Activated CD4-positive, alpha-beta memory T cell treated with anti-CD3 and anti-CD28 coated beads for 36 hours (primary cell): ENCODE measurements at regions of chr10 and their contacts with region 1.

Region 1: DNA sequence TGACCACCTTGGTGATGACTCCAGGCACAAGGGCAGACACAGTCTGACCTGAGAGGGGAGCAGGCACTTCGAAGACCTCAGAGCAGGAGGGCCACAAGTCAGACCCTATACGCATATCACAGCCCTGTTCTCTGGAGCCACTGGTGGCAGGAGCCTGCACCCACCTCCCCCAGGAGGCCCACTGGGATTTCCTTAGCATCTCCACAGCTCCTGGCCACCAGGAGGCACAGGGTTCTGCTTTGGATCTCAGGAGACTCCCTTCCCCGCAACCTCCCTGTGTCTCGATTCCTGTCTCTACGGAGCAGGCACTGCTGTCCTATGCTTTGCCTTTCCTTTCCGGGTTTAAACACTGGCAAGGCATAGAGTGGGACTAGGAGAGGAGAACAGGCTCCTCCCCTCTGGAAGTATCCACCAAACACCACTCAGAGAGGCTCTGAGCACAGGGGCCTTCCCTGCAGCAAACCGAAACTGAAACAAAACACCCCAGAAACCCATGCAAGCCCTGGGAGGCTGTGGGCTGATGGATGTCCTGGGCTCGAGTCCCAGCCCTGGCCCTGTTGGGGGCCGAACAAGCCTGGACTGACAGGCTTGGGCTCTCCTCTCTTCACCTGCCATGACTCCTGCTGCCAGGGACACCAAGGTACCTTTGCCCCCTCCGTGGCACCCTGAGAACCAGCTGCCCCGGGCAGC is 166.3 kb downstream of the NEURL1 start:
- DNase-seq: peak; percentile 71
- H3K4me3 Mint-ChIP-seq: peak overlapping the region; percentile 82
- H3K27ac Mint-ChIP-seq: peak overlapping the region; percentile 74
- H3K4me1 Mint-ChIP-seq: peaks cover 5% of the 10 kb centered on the region
- H3K27me3 Mint-ChIP-seq: no peaks in the 10 kb centered on the region

Region 2: DNA sequence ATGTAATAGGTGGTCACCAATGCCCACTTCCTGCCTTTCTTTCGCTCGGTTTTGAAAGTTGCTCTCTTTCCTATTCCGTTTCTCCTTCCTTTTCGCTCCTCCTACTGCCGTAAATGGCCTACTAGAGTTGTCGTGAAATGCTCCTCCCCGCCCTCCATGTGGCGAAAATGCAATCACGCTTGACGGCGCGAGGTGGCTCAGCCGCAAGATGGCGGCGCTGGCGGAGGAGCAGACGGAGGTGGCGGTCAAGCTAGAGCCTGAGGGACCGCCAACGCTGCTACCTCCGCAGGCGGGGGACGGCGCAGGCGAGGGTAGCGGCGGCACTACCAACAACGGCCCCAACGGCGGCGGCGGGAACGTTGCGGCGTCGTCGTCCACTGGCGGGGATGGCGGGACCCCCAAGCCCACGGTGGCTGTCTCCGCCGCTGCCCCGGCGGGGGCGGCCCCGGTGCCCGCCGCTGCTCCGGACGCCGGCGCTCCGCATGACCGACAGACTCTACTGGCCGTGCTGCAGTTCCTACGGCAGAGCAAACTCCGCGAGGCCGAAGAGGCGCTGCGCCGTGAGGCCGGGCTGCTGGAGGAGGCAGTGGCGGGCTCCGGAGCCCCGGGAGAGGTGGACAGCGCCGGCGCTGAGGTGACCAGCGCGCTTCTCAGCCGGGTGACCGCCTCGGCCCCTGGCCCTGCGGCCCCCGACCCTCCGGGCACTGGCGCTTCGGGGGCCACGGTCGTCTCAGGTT is 291.9 kb before region 1 on chr10 and contains the start of gene TAF5:
- CTCF ChIA-PET with region 1: no interaction called
- POLR2A ChIA-PET with region 1: no interaction called
- intact Hi-C with region 1: no loop called
- DNase-seq: peak; percentile 95
- H3K4me3 Mint-ChIP-seq: peak within 1 kb of the TSS; percentile 83
- H3K27ac Mint-ChIP-seq: peak within 1 kb of the TSS; percentile 86
- H3K4me1 Mint-ChIP-seq: peaks cover 11% of the 10 kb centered on the region
- H3K27me3 Mint-ChIP-seq: no peaks in the 10 kb centered on the region
- total RNA-seq, gene TAF5: 12.9 to 13.2 TPM

Region 3: DNA sequence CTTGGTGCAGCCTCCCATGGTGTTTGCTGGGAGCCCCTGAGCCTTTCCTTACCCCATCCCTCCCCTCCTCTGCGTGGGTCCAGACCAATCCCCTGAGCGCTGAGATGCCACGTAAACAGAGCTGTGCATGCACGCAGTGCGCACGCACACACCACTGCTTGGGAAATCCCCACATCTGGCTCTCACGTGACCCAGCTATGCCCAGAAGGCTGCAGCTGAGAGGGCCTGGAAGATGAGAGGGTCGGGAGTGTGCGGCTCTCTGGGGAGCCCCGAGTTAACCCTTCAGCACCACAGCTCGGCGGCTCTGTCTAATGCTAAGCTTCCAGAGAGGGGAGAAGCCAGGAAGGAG is 18.3 kb after region 1 on chr10:
- CTCF ChIA-PET with region 1: interaction called, 3 read pairs
- POLR2A ChIA-PET with region 1: interaction called, 6 read pairs
- intact Hi-C with region 1: loop called (anchors 2 kb)
- DNase-seq: peak; percentile 94
- H3K4me3 Mint-ChIP-seq: peak overlapping the region; percentile 84
- H3K27ac Mint-ChIP-seq: peak overlapping the region; percentile 90
- H3K4me1 Mint-ChIP-seq: peaks cover 24% of the 10 kb centered on the region
- H3K27me3 Mint-ChIP-seq: no peaks in the 10 kb centered on the region

Region 4: DNA sequence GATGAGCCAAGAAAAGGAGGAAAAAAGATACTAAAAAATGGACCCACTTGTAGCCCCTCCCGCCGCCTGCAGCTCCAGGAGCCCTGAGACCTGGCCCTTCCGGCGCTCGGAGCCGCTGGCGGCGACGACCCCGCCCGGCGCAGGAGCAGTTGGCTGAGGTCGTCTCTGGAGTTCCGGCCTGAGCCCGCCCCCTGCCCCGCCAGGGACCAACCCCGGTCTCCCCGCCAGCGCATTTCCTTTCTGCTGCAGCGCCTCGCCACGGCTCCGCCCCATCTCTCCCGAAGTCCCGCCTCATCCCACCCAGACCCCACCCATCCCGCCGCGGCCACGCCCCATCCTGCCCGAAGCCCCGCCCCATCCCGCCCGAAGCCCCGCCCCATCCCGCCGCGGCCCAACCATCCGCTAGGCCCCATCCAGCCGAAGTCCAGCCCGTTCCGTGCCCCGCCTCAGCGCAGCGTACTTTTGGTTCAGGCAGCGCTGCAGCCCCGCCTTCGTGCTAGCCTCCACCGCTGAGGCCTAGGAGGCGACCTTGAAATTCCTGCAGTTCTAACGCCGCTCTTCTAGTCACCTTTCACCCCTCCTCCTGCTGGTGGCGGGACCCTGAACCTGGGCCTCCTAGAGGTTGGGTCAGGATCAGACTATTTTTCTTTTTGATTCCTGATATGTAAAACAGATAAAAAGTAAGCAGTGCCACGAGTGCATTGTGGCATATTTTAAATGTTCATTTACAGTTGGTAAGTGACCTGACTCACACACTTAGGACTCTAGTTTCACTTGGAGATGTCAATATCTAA is 258.4 kb after region 1 on chr10 and contains the start of gene STN1:
- CTCF ChIA-PET with region 1: no interaction called
- POLR2A ChIA-PET with region 1: no interaction called
- intact Hi-C with region 1: no loop called
- DNase-seq: peak; percentile 98
- H3K4me3 Mint-ChIP-seq: peak within 1 kb of the TSS; percentile 98
- H3K27ac Mint-ChIP-seq: peak within 1 kb of the TSS; percentile 98
- H3K4me1 Mint-ChIP-seq: peaks cover 29% of the 10 kb centered on the region
- H3K27me3 Mint-ChIP-seq: no peaks in the 10 kb centered on the region
- total RNA-seq, gene STN1: 56.1 to 57.0 TPM